Activated CD4-positive, alpha-beta T cell treated with anti-CD3 and anti-CD28 coated beads for 36 hours (primary cell): ENCODE measurements at regions of chr22 and their contacts with region 1.

Region 1: GRCh38 chr22:36065775-36066559 is 37.3 kb upstream of the RBFOX2 start:
- DNase-seq: peak; percentile 85
- ATAC-seq: peak; percentile 85
- H3K4me3 Mint-ChIP-seq: peak overlapping the region; percentile 69
- H3K27ac Mint-ChIP-seq: peak overlapping the region; percentile 91
- H3K4me1 Mint-ChIP-seq: peaks cover 5% of the 10 kb centered on the region
- H3K27me3 Mint-ChIP-seq: no peaks in the 10 kb centered on the region

Region 2: GRCh38 chr22:35350539-35351503 is 715.1 kb before region 1 on chr22:
- CTCF ChIA-PET with region 1: no interaction called
- POLR2A ChIA-PET with region 1: no interaction called
- intact Hi-C with region 1: loop called in 1 of 2 experiments (anchors 10 kb)
- DNase-seq: peak; percentile 93
- ATAC-seq: peak; percentile 90
- H3K4me3 Mint-ChIP-seq: peak overlapping the region; percentile 72
- H3K27ac Mint-ChIP-seq: peak overlapping the region; percentile 55
- H3K4me1 Mint-ChIP-seq: peaks cover 28% of the 10 kb centered on the region
- H3K27me3 Mint-ChIP-seq: peaks cover 6% of the 10 kb centered on the region

Region 3: GRCh38 chr22:35930933-35931332 is 135.0 kb before region 1 on chr22:
- CTCF ChIA-PET with region 1: interaction called, 3 read pairs
- POLR2A ChIA-PET with region 1: no interaction called
- intact Hi-C with region 1: loop called in 1 of 2 experiments (anchors 1 kb)
- DNase-seq: no peak
- ATAC-seq: no peak
- H3K4me3 Mint-ChIP-seq: no peak overlapping the region
- H3K27ac Mint-ChIP-seq: no peak overlapping the region
- H3K4me1 Mint-ChIP-seq: no peaks in the 10 kb centered on the region
- H3K27me3 Mint-ChIP-seq: peaks cover 2% of the 10 kb centered on the region

Region 4: DNA sequence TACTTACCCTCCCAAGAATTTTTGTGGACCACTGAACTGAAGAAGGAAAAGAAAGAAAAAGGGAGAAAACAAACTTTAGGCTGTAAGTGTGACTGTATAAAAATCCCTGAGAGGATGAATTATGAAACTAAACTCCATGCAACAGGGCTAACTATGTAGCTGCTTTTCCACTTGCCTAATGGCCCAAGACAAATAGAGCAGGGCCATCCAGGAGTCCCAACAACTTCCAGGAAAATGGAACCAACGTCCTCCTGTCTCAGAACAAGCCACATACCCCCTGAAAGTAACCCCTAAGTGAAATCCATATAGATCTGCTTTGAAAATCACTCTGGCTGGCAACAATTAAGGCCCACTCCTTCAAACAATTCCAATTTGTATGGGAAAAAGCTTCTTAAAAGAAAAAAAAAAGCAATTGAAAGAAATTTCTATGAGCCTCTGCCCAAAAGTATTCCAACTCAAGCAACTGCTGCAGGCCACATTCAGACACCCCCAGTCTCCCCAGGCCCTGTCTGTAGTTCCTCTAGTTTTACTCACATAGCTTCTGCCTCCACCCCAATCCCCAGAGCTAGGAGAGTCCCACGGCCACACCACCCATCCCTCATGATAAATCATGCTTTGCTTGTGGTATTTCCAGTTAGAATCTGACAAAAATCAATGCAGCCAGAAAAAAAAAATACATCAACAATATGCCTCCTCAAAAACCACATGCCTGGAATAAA is 50.0 kb before region 1 on chr22:
- CTCF ChIA-PET with region 1: interaction called, 13 read pairs
- POLR2A ChIA-PET with region 1: no interaction called
- intact Hi-C with region 1: no loop called
- DNase-seq: no peak
- ATAC-seq: no peak
- H3K4me3 Mint-ChIP-seq: no peak overlapping the region
- H3K27ac Mint-ChIP-seq: no peak overlapping the region
- H3K4me1 Mint-ChIP-seq: no peaks in the 10 kb centered on the region
- H3K27me3 Mint-ChIP-seq: peaks cover 6% of the 10 kb centered on the region

Region 5: GRCh38 chr22:36081023-36081431 is 15.1 kb after region 1 on chr22:
- CTCF ChIA-PET with region 1: interaction called, 41 read pairs
- POLR2A ChIA-PET with region 1: no interaction called
- intact Hi-C with region 1: no loop called
- DNase-seq: no peak
- ATAC-seq: no peak
- H3K4me3 Mint-ChIP-seq: no peak overlapping the region
- H3K27ac Mint-ChIP-seq: no peak overlapping the region
- H3K4me1 Mint-ChIP-seq: peaks cover 3% of the 10 kb centered on the region
- H3K27me3 Mint-ChIP-seq: no peaks in the 10 kb centered on the region

Region 6: GRCh38 chr22:36180038-36180880 is 114.3 kb after region 1 on chr22:
- CTCF ChIA-PET with region 1: interaction called, 13 read pairs
- POLR2A ChIA-PET with region 1: no interaction called
- intact Hi-C with region 1: loop called (anchors 1 to 5 kb)
- DNase-seq: peak; percentile 92
- ATAC-seq: peak; percentile 99
- H3K4me3 Mint-ChIP-seq: no peak overlapping the region
- H3K27ac Mint-ChIP-seq: no peak overlapping the region
- H3K4me1 Mint-ChIP-seq: peaks cover 10% of the 10 kb centered on the region
- H3K27me3 Mint-ChIP-seq: no peaks in the 10 kb centered on the region

Region 7: DNA sequence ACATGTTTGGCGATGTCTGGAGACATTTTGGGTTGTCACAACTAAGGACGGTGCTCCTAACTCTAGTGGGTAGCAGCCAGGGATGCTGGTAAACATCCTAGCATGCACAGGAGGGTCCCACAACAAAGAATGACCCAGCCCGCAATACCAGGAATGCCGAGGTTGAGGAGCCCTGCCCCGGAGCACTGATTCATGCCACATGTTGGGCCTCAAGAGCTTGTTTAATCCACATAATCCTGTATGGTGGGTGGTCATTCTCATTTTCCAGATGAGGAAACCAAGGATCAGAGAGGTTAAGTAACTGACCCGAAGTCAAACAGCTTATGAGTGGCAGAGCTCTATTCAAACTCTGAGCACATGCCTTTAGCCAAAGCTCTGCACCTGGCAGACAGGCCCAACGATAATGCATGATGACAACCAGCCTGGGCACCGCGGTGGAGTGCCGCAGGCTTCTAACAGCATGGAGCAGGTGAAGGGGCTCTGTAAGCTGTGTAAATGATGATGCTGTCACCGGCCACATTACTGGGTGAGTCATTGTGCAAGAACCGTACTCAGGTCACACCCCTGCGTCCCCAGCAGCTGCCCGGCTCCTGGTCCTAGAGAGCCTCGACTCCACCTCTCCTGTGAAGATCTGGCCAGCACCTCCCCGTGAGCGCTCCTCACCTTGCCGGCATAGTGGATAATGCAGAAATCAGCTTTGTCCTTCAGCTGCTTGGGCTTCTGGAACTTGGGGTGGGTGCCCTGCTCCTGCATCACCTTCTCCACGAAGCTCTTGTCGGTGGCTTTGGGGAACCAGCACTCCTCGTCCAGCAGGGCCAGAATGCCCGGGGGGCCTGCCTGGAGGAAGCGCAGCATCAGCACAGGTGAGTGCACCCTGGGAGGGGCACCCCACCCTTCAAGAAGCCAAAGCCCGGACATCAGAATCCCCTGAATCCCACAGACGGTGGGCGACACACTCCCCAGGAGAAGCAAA is 245.7 kb after region 1 on chr22:
- CTCF ChIA-PET with region 1: no interaction called
- POLR2A ChIA-PET with region 1: no interaction called
- intact Hi-C with region 1: no loop called
- DNase-seq: no peak
- ATAC-seq: no peak
- H3K4me3 Mint-ChIP-seq: no peak overlapping the region
- H3K27ac Mint-ChIP-seq: no peak overlapping the region
- H3K4me1 Mint-ChIP-seq: no peaks in the 10 kb centered on the region
- H3K27me3 Mint-ChIP-seq: no peaks in the 10 kb centered on the region

Region 8: DNA sequence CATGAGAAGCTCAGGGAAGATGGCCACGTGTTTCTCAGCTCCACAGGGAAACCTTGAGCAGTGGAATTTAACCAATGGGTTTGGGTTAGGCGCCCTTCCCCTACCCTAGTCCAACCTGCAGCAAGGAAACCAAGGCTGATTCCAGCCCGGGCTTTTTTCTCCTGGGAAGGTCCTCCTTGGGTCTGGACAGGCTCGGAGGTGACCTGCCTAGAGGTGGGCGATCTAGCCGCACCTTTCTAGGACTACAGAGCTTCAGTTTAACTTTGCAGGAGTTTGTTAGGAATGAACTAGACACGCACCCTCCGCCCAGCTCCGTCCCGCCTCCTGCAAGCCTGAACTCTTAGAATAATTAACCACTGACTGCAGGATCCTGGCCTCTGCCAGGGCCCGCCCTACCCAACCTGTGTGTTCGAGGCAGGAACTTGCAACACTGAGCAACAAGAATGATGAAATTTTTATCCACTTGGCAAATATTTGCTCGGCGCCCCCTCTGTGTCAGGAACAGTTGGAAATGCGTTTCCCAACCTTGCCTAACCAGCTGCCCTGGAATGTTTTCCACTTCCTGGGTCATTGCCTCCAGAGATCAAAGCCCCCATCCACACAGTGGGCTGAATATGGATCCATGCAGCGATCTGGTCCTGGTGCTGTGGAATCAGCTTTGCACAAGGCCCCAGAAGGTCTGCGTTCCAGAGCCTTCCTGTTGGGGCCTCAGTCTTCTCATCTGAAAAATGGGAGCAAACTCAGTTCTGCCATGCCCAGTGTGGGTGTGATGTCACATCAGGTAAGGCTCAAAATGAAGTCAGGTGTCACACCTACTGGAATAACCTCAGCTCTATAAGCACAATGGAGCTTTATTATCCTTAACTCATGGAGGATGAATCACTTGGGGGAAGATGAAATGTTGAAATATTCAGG is 966.8 kb after region 1 on chr22:
- CTCF ChIA-PET with region 1: no interaction called
- POLR2A ChIA-PET with region 1: no interaction called
- intact Hi-C with region 1: no loop called
- DNase-seq: no peak
- ATAC-seq: no peak
- H3K4me3 Mint-ChIP-seq: no peak overlapping the region
- H3K27ac Mint-ChIP-seq: no peak overlapping the region
- H3K4me1 Mint-ChIP-seq: no peaks in the 10 kb centered on the region
- H3K27me3 Mint-ChIP-seq: peaks cover 10% of the 10 kb centered on the region

Region 9: GRCh38 chr22:37566903-37567820 is 1501.2 kb after region 1 on chr22:
- CTCF ChIA-PET with region 1: no interaction called
- POLR2A ChIA-PET with region 1: no interaction called
- intact Hi-C with region 1: no loop called
- DNase-seq: peak; percentile 96
- ATAC-seq: peak; percentile 93
- H3K4me3 Mint-ChIP-seq: peak overlapping the region; percentile 43
- H3K27ac Mint-ChIP-seq: peak overlapping the region; percentile 87
- H3K4me1 Mint-ChIP-seq: peaks cover 23% of the 10 kb centered on the region
- H3K27me3 Mint-ChIP-seq: peaks cover 19% of the 10 kb centered on the region